Colonic mucosa (tissue), 4 donors: ENCODE measurements at regions of chr7 and their contacts with region 1.

Region 1: GRCh38 chr7:76310492-76311080 is 8.1 kb downstream of the HSPB1 start:
- DNase-seq: peak; percentile 58
- H3K4me3 ChIP-seq: no peak overlapping the region
- H3K27ac ChIP-seq: no peak overlapping the region
- H3K4me1 ChIP-seq: no peaks in the 10 kb centered on the region
- H3K27me3 ChIP-seq: no peaks in the 10 kb centered on the region
- CTCF ChIP-seq: no peak

Region 2: GRCh38 chr7:76142861-76143260 is 167.7 kb before region 1 on chr7:
- intact Hi-C with region 1: no loop called
- DNase-seq: no peak
- H3K4me3 ChIP-seq: no peak overlapping the region
- H3K27ac ChIP-seq: no peak overlapping the region
- H3K4me1 ChIP-seq: no peaks in the 10 kb centered on the region
- H3K27me3 ChIP-seq: no peaks in the 10 kb centered on the region
- CTCF ChIP-seq: no peak

Region 3: GRCh38 chr7:76291343-76292212 is 19.0 kb before region 1 on chr7:
- intact Hi-C with region 1: loop called (anchors 2 kb)
- DNase-seq: peak; percentile 96
- H3K4me3 ChIP-seq: peak overlapping the region; percentile 17
- H3K27ac ChIP-seq: peak overlapping the region; percentile 92
- H3K4me1 ChIP-seq: peaks cover 22% of the 10 kb centered on the region
- H3K27me3 ChIP-seq: no peaks in the 10 kb centered on the region
- CTCF ChIP-seq: peak; percentile 97